SK-N-SH (cell line): ENCODE measurements at regions of chr9 and their contacts with region 1.

Region 1: GRCh38 chr9:93682232-93682968 is 106.0 kb downstream of the PHF2 start:
- DNase-seq: peak; percentile 85
- H3K4me3 ChIP-seq: no peak overlapping the region
- H3K27ac ChIP-seq: no peak overlapping the region
- H3K4me1 ChIP-seq: peaks cover 0 to 4% of the 10 kb centered on the region in 2 experiments; a peak in 1 of 4 replicates
- H3K27me3 ChIP-seq: no peaks in the 10 kb centered on the region
- CTCF ChIP-seq: peak; percentile 81
- EP300 ChIP-seq: no peak
- RAD21 ChIP-seq: peak; percentile 82

Region 2: DNA sequence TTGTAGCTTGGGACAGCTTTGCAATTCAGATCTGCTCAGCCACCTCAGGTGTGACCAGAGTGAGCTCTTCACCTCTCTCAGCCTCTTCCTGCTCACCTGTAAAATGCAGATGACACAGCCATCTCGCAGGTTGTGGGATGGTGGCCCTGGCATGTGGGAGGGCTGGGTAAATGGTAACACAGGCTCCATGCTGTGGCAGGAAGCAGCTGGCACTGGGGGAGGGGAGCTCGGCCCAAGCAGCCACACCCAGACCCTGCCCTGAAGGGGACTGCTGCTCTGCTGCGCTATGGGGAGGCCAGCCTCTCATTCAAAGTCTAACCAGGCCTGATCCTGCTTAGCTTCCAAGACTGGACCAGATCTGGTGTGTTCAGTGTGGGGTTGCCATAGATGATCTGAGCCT is 81.9 kb before region 1 on chr9:
- CTCF ChIA-PET with region 1: no interaction called
- POLR2A ChIA-PET with region 1: no interaction called
- DNase-seq: no peak
- H3K4me3 ChIP-seq: no peak overlapping the region
- H3K27ac ChIP-seq: no peak overlapping the region
- H3K4me1 ChIP-seq: peaks cover 0 to 7% of the 10 kb centered on the region in 2 experiments; a peak in 1 of 4 replicates
- H3K27me3 ChIP-seq: no peaks in the 10 kb centered on the region
- CTCF ChIP-seq: no peak
- EP300 ChIP-seq: no peak
- RAD21 ChIP-seq: no peak

Region 3: GRCh38 chr9:93670208-93671019 is 12.0 kb before region 1 on chr9:
- CTCF ChIA-PET with region 1: interaction called, 24 read pairs
- POLR2A ChIA-PET with region 1: no interaction called
- DNase-seq: peak; percentile 50
- H3K4me3 ChIP-seq: no peak overlapping the region
- H3K27ac ChIP-seq: no peak overlapping the region
- H3K4me1 ChIP-seq: peaks cover 0 to 6% of the 10 kb centered on the region in 2 experiments; a peak in 1 of 4 replicates
- H3K27me3 ChIP-seq: no peaks in the 10 kb centered on the region
- CTCF ChIP-seq: no peak
- EP300 ChIP-seq: no peak
- RAD21 ChIP-seq: no peak

Region 4: DNA sequence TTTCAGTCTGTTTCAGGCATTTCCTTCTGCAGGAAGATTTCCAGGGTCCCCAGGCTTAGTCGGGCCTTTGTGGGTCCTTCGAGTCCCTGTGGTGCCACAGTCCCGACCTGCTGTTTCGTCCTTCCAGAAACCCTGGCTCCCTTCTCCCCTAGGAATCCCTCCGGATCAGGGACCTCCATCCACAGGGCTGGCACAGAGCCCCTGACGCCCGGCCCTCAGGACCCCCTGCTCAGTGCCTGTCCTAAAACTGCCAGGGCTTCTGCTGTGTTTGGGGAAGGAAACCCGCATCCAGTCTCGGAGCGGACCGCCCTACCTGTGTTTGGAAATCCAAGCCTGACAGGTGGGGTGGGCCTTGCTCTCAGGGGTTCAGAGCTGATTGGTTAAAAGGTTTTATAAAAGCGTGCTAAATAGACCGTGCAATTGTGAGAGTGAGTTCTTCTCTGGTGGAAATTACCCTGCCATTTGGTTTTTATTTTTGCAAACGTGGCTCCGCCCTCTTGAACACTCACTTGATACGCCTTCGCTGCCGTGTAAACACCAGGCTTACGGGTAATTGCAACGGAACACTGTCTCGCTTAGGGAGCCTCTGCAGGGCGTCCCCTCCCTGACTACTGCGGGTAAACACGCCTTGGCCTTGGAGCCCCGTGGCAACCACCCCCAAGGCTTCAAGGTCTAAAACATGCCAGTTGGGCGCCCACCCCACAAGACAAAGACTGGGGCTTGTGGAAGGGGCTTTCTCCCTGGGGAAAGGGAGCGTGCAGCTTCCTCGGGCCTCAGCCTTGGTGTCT is 15.1 kb after region 1 on chr9:
- CTCF ChIA-PET with region 1: interaction called, 12 read pairs
- POLR2A ChIA-PET with region 1: no interaction called
- DNase-seq: no peak
- H3K4me3 ChIP-seq: no peak overlapping the region
- H3K27ac ChIP-seq: no peak overlapping the region
- H3K4me1 ChIP-seq: no peaks in the 10 kb centered on the region
- H3K27me3 ChIP-seq: no peaks in the 10 kb centered on the region
- CTCF ChIP-seq: no peak
- EP300 ChIP-seq: no peak
- RAD21 ChIP-seq: no peak

Region 5: GRCh38 chr9:93950619-93951601 is 268.5 kb after region 1 on chr9:
- CTCF ChIA-PET with region 1: interaction called, 21 read pairs
- POLR2A ChIA-PET with region 1: no interaction called
- DNase-seq: peak; percentile 76
- H3K4me3 ChIP-seq: peak overlapping the region; percentile 45 to 53
- H3K27ac ChIP-seq: no peak overlapping the region
- H3K4me1 ChIP-seq: peaks cover 0 to 11% of the 10 kb centered on the region in 2 experiments; a peak in 1 of 4 replicates
- H3K27me3 ChIP-seq: peaks cover 85% of the 10 kb centered on the region
- CTCF ChIP-seq: no peak
- EP300 ChIP-seq: no peak
- RAD21 ChIP-seq: no peak

Region 6: DNA sequence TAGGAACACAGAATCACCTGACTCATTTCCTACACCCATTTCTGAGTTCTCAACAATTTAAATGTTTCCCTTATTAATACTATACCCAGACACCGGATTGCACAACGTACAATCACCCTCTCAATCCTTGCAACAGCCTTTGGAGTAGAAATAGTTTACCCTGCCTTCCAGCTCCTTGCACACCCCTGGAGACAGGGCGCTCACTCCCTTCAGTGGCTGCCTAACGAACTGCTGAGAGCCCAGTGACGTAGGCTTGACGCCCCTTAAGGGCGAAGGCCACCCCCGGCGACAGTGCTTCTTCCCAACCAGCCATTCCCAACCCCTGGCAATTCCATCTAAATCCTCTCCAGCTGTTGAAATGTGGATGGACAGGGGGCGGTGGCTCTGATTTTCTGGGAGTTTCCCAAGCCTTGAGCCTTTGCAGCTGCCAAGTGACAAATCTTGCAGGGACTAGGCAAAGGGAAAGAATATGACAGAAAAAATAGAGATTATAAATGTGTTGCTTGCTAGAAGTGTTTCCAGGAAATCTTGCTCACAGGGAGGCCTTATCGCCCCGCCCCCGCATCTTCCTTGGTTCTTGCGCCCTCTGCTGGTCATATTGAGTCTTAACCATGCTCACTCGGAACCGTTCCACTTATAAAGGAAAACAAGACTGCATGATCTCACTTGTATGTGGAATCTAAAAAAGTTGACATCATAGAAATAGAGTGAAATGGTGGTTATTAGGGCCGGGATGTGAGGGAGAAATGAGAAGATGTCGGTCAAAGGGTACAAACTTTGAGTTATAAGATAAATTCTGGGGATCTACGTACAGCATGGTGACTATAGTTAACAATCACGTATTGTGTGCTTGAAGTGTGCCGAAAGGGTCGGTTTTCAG is 280.4 kb after region 1 on chr9:
- CTCF ChIA-PET with region 1: interaction called, 126 read pairs
- POLR2A ChIA-PET with region 1: no interaction called
- DNase-seq: peak; percentile 89
- H3K4me3 ChIP-seq: peak overlapping the region in 1 of 2 experiments; percentile 28; a peak in 1 of 4 replicates
- H3K27ac ChIP-seq: no peak overlapping the region
- H3K4me1 ChIP-seq: peaks cover 0 to 12% of the 10 kb centered on the region in 2 experiments; a peak in 1 of 4 replicates
- H3K27me3 ChIP-seq: peaks cover 38% of the 10 kb centered on the region
- CTCF ChIP-seq: peak; percentile 88
- EP300 ChIP-seq: no peak
- RAD21 ChIP-seq: peak; percentile 82

Region 7: DNA sequence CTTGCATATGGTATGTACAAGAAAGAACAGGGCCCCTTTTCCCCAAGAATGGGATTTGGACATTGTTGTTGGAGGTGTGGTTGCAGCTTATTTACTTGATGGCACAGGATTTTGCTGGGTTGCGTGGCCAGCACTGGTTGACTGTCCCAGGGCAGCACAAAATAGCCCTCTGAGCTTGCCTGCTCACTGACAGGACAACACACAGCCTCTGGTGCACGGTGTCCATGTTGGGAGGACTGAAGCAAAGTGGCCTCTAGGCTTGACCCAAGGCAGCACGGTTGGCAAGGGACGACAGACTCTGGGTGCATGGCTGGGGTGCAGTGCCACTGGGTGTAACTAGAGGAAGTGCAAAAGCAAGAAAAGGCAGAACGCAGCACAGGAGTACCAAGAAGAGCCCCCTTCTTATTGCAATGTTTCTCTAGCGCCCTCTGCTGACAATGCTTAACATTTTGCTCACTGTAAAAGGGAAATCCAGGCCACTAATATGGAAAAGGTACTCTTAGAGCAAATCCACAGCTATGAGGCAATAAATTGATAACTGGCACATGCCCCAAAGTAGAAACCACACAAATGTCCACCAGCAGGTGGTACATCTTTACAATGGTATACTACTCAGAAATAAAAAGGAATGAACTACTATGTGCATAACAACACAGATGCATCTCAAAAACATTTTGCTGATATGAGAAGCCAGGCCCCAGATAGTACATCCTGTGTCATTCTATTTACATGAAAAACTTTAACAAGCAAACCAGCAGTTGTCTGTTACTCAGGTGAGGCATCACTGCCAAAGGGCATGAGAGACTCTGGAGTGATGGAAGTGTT is 320.1 kb after region 1 on chr9:
- CTCF ChIA-PET with region 1: interaction called, 21 read pairs
- POLR2A ChIA-PET with region 1: no interaction called
- DNase-seq: peak; percentile 46
- H3K4me3 ChIP-seq: peak overlapping the region in 1 of 2 experiments; percentile 52; a peak in 1 of 4 replicates
- H3K27ac ChIP-seq: no peak overlapping the region
- H3K4me1 ChIP-seq: no peaks in the 10 kb centered on the region; a peak in 1 of 4 replicates
- H3K27me3 ChIP-seq: no peaks in the 10 kb centered on the region
- CTCF ChIP-seq: peak; percentile 69
- EP300 ChIP-seq: no peak
- RAD21 ChIP-seq: peak; percentile 61